ENCODE measurements at regions of chr15 and their contacts with region 1.

Region 1: DNA sequence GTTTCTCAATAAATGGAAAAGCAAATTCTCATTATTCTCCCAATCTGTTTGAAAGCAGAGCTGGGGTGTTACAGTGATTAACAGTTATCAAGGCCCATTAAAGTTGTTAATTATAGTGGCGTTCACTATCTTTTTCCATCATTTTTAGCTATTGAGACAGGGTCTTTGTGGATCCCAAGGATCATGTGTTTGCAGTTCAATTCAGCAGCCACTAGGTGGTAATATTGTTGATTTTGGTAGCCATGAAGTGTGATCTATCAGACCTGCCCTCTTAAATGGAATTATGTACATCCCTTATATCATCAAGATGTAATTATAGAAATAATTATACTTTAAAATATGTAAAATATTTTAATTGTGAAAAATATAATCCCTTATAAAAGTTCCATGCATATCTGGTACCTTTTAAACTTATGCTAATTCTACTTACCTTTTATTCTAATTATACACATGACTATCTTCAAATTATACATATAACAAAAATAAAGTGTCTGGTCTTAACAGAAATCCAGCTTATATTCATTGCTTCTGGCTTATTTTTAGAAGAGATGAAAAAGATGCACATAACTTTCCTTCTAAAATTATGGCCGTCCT is 126.4 kb downstream of the GREM1 start:
- DNase-seq: peak; percentile 50
- H3K4me3 ChIP-seq: no peak overlapping the region
- H3K27ac ChIP-seq: peak overlapping the region in 1 of 2 experiments; percentile 21; a peak in 1 of 4 replicates
- H3K4me1 ChIP-seq: no peaks in the 10 kb centered on the region; a peak in 3 of 4 replicates
- H3K27me3 ChIP-seq: no peaks in the 10 kb centered on the region
- CTCF ChIP-seq: peak; percentile 70
- EP300 ChIP-seq: no peak
- RAD21 ChIP-seq: peak; percentile 72

Region 2: GRCh38 chr15:32664796-32665195 is 179.4 kb before region 1 on chr15:
- CTCF ChIA-PET with region 1: interaction called, 63 read pairs
- POLR2A ChIA-PET with region 1: no interaction called
- DNase-seq: no peak
- H3K4me3 ChIP-seq: no peak overlapping the region
- H3K27ac ChIP-seq: no peak overlapping the region
- H3K4me1 ChIP-seq: peaks cover 4 to 14% of the 10 kb centered on the region in 2 experiments; a peak in 3 of 4 replicates
- H3K27me3 ChIP-seq: no peaks in the 10 kb centered on the region
- CTCF ChIP-seq: no peak
- EP300 ChIP-seq: no peak
- RAD21 ChIP-seq: no peak

Region 3: DNA sequence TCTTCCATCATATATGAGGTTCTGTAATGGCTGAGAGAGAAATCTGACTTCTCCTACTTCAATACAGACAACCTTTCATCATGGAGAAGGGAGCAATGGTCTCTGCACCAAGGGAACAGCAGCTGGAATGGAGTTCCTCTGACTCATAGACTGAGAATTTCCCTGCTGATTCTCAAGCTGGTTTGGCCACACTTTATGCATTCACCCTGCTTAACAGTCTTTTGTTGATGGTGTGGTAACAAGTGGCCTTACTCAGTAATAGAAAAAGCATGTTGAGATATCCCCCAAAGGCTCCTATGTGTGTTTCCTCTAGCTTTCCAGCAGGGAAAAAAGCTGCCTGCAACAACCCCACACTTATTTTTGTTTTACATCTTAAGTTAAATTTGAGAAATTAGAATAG is 11.7 kb after region 1 on chr15:
- CTCF ChIA-PET with region 1: interaction called, 26 read pairs
- POLR2A ChIA-PET with region 1: interaction called, 3 read pairs
- DNase-seq: no peak
- H3K4me3 ChIP-seq: no peak overlapping the region
- H3K27ac ChIP-seq: peak overlapping the region; percentile 93 to 99
- H3K4me1 ChIP-seq: peaks cover 0 to 30% of the 10 kb centered on the region in 2 experiments; a peak in 3 of 4 replicates
- H3K27me3 ChIP-seq: no peaks in the 10 kb centered on the region
- CTCF ChIP-seq: peak; percentile 25; the same call in 1 of the 2 replicates
- EP300 ChIP-seq: peak; percentile 52 to 81
- RAD21 ChIP-seq: no peak

Region 4: GRCh38 chr15:32861761-32862160 is 17.5 kb after region 1 on chr15:
- CTCF ChIA-PET with region 1: interaction called, 26 read pairs
- POLR2A ChIA-PET with region 1: interaction called, 3 read pairs
- DNase-seq: peak; percentile 13
- H3K4me3 ChIP-seq: no peak overlapping the region
- H3K27ac ChIP-seq: 0 out of 4 replicates have a peak overlapping the region, but pooled peaks of 1 of the 2 experiments have one; percentile 9
- H3K4me1 ChIP-seq: peaks cover 4 to 11% of the 10 kb centered on the region in 2 experiments; a peak in 2 of 4 replicates
- H3K27me3 ChIP-seq: no peaks in the 10 kb centered on the region
- CTCF ChIP-seq: no peak
- EP300 ChIP-seq: no peak
- RAD21 ChIP-seq: no peak

Region 5: DNA sequence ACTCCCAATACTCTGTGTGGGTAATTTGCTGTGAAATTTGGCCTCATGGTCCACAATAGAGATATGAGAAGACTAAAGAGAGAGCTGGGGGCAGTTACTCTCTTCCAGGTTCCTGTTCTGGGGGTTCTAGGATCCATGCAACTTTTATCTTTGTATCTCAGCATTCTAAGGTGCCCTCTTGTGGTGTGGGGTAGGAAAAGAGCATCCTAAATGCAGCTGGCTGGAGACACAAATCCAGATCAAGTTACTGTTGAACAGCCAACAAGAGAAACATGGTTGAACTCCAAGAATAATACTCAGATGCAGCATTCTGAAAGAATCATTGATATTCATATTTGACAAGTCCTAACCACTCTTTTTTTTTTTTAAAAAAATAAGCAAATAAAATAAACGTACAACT is 111.8 kb after region 1 on chr15:
- CTCF ChIA-PET with region 1: interaction called, 30 read pairs
- POLR2A ChIA-PET with region 1: no interaction called
- DNase-seq: peak; percentile 40
- H3K4me3 ChIP-seq: no peak overlapping the region
- H3K27ac ChIP-seq: peak overlapping the region; percentile 35 to 55; a peak in 3 of 4 replicates
- H3K4me1 ChIP-seq: peaks cover 0 to 15% of the 10 kb centered on the region in 2 experiments; a peak in 3 of 4 replicates
- H3K27me3 ChIP-seq: no peaks in the 10 kb centered on the region
- CTCF ChIP-seq: peak; percentile 76
- EP300 ChIP-seq: no peak
- RAD21 ChIP-seq: peak; percentile 70

Region 6: GRCh38 chr15:32994810-32995424 is 150.7 kb after region 1 on chr15:
- CTCF ChIA-PET with region 1: interaction called, 61 read pairs
- POLR2A ChIA-PET with region 1: no interaction called
- DNase-seq: peak; percentile 38
- H3K4me3 ChIP-seq: no peak overlapping the region
- H3K27ac ChIP-seq: peak overlapping the region in 1 of 2 experiments; percentile 43; a peak in 1 of 4 replicates
- H3K4me1 ChIP-seq: peaks cover 0 to 10% of the 10 kb centered on the region in 2 experiments; a peak in 2 of 4 replicates
- H3K27me3 ChIP-seq: no peaks in the 10 kb centered on the region
- CTCF ChIP-seq: peak; percentile 73
- EP300 ChIP-seq: no peak
- RAD21 ChIP-seq: peak; percentile 87

Measured in SK-N-SH (cell line).